ENCODE measurements at regions of chr9 and their contacts with region 1.

Region 1: DNA sequence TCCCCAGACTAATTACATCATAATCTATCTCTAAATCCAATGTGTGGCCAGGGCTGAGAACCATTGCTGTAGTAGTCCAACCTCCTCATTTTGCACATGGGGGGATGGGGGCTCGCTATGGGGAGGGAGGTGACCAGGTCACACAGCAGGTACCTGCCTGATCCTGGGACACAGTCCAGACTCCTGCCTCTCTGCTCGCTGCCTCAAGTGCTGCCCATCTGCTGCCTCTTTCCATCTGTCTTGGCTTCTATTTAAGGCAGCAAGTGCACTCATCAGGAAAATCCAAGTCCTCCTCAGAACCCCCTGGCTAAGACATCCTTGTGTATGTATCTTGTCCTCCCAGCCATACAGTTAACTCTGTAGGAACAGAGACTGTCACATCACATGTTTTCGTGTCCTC is 57.7 kb upstream of the FRRS1L start:
- DNase-seq: no peak
- H3K4me3 ChIP-seq: no peak overlapping the region
- H3K27ac ChIP-seq: no peak overlapping the region
- H3K4me1 ChIP-seq: no peaks in the 10 kb centered on the region
- H3K27me3 ChIP-seq: peaks cover 0 to 3% (median 0%) of the 10 kb centered on the region in 4 experiments; a peak in 2 of 7 replicates
- CTCF ChIP-seq: no peak
- EP300 ChIP-seq: no peak
- POLR2A ChIP-seq: no peak
- RAD21 ChIP-seq: no peak

Region 2: GRCh38 chr9:109198736-109199379 is 25.9 kb before region 1 on chr9:
- CTCF ChIA-PET with region 1: interaction called, 10 read pairs
- POLR2A ChIA-PET with region 1: no interaction called
- DNase-seq: no peak
- H3K4me3 ChIP-seq: no peak overlapping the region
- H3K27ac ChIP-seq: no peak overlapping the region
- H3K4me1 ChIP-seq: no peaks in the 10 kb centered on the region
- H3K27me3 ChIP-seq: no peaks in the 10 kb centered on the region
- CTCF ChIP-seq: peak; percentile 35 to 62 (median 48)
- EP300 ChIP-seq: no peak
- POLR2A ChIP-seq: no peak
- RAD21 ChIP-seq: peak; percentile 42 to 58

Region 3: GRCh38 chr9:109274884-109275730 is 50.4 kb after region 1 on chr9:
- CTCF ChIA-PET with region 1: no interaction called
- POLR2A ChIA-PET with region 1: no interaction called
- DNase-seq: no peak
- H3K4me3 ChIP-seq: no peak overlapping the region
- H3K27ac ChIP-seq: no peak overlapping the region
- H3K4me1 ChIP-seq: peaks cover 0 to 4% (median 4%) of the 10 kb centered on the region in 4 experiments; a peak in 6 of 7 replicates
- H3K27me3 ChIP-seq: no peaks in the 10 kb centered on the region
- CTCF ChIP-seq: no peak
- EP300 ChIP-seq: no peak
- POLR2A ChIP-seq: no peak
- RAD21 ChIP-seq: no peak

Measured in H1 (cell line).